B cell (primary cell): ENCODE measurements at regions of chr14 and their contacts with region 1.

Region 1: DNA sequence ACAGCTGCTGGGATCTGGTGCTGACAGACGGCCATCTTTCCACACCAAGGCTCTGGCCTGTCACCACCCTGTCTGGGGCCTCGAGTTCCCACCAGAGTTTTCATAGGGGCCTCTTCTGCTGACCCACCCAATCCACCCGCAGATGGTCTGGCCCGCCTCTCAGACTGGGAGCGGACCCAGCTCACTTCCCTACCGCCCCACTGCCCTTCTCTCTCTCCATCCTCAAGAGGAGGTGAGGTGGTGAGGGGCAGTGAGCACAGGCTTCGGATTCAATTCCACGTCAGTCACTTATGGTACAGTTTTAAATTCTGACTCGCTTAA is 12.3 kb upstream of the RPS6KL1 start:
- DNase-seq: no peak
- ATAC-seq: no peak
- H3K4me3 ChIP-seq: no peak overlapping the region
- H3K4me3 Mint-ChIP-seq: no peak overlapping the region
- H3K27ac ChIP-seq: no peak overlapping the region
- H3K27ac Mint-ChIP-seq: no peak overlapping the region
- H3K4me1 ChIP-seq: peaks cover 25 to 33% of the 10 kb centered on the region in 2 donors
- H3K4me1 Mint-ChIP-seq: peaks cover 43% of the 10 kb centered on the region
- H3K27me3 ChIP-seq: peaks cover 0 to 4% (median 0%) of the 10 kb centered on the region in 4 experiments
- H3K27me3 Mint-ChIP-seq: peaks cover 10% of the 10 kb centered on the region
- CTCF ChIP-seq: no peak

Region 2: DNA sequence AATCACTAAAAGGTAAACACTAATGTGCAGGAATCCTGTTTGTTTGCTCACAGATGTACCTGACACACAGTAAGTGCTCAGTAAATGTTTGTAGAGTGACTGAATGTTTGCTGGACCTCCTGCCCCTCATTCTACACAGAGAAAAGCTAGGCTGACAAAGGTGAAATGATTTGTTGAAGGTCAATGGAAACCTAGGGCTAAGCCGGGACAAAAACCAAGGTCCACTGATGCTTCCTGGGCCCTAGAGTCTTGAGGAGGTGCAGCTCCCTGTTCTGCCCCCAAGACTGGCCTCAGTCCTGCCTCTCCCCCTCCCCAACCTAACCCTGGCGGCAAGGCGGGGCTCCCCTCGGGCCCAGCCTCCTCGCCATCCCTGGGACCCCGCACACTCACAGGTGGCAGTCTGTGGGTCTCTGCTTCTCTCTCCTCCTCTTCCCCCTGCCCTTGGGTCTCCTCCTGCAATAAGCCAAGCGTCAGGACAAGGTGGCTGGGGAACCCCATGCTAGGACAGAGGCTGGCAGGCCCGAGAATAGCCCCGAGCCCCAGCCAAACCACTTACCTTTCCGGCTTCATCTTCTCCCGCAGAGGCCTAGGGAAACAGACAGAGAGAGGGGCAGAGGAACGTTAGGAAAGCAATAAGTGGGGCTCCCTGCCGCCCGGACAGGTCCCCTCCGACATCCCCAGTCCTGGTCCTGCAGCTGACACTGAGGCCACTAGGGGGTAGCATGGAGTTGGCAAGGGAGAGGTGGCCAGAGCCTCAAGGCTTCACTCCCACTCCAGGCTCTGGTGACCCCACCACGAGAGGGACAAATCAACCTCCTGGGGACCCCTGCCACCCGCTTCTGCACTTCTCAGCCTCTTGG is 10.7 kb after region 1 on chr14:
- CTCF ChIA-PET with region 1: interaction called, 21 read pairs
- POLR2A ChIA-PET with region 1: no interaction called
- intact Hi-C with region 1: no loop called
- DNase-seq: peak; percentile 80
- ATAC-seq: peak; percentile 71
- H3K4me3 ChIP-seq: no peak overlapping the region
- H3K4me3 Mint-ChIP-seq: peak overlapping the region; percentile 32
- H3K27ac ChIP-seq: no peak overlapping the region
- H3K27ac Mint-ChIP-seq: peak overlapping the region; percentile 72
- H3K4me1 ChIP-seq: peaks cover 31 to 35% of the 10 kb centered on the region in 2 donors
- H3K4me1 Mint-ChIP-seq: peaks cover 34% of the 10 kb centered on the region
- H3K27me3 ChIP-seq: no peaks in the 10 kb centered on the region
- H3K27me3 Mint-ChIP-seq: no peaks in the 10 kb centered on the region
- CTCF ChIP-seq: peak; percentile 97

Region 3: GRCh38 chr14:75267141-75267721 is 331.9 kb after region 1 on chr14:
- CTCF ChIA-PET with region 1: no interaction called
- POLR2A ChIA-PET with region 1: no interaction called
- intact Hi-C with region 1: no loop called
- DNase-seq: no peak
- ATAC-seq: no peak
- H3K4me3 ChIP-seq: no peak overlapping the region
- H3K4me3 Mint-ChIP-seq: no peak overlapping the region
- H3K27ac ChIP-seq: no peak overlapping the region
- H3K27ac Mint-ChIP-seq: no peak overlapping the region
- H3K4me1 ChIP-seq: no peaks in the 10 kb centered on the region
- H3K4me1 Mint-ChIP-seq: peaks cover 3% of the 10 kb centered on the region
- H3K27me3 ChIP-seq: peaks cover 0 to 13% (median 5%) of the 10 kb centered on the region in 4 experiments
- H3K27me3 Mint-ChIP-seq: peaks cover 7% of the 10 kb centered on the region
- CTCF ChIP-seq: no peak